Caco-2 (cell line): ENCODE measurements at regions of chr20 and their contacts with region 1.

Region 1: DNA sequence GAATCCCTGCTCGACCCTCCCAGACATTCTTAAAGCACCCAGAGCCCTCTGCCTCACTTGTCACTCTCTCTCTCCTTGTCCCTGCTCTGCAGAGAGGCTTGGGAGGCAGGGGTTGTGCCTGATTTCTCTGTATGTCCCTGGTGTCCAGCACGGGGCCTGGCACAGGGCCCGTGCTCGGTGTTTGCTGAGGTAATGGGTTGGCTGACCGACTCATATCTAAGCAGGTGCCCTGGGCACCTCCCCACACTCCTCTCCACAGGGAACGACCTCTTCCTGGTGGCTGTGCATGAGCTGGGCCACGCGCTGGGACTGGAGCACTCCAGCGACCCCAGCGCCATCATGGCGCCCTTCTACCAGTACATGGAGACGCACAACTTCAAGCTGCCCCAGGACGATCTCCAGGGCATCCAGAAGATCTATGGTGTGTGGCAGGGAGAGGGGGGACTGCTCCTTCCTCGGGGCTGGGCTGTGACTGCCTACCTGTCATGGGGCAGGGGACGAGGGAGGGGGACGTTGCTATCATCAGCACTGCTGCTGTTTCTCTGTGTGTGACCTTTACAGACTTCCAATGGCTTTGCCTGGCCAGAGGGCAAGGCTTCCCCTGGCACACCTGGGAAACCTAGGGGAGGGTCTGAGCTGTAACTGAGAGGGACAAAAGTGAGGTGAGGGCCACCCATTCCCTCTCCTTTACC is 14.2 kb downstream of the MMP24OS start:
- DNase-seq: peak in 1 of 2 experiments; percentile 57
- H3K4me3 ChIP-seq: peak overlapping the region; percentile 13
- H3K4me3 Mint-ChIP-seq: peak overlapping the region; percentile 63
- H3K27ac Mint-ChIP-seq: peak overlapping the region; percentile 98
- H3K4me1 ChIP-seq: peaks cover 65% of the 10 kb centered on the region
- H3K4me1 Mint-ChIP-seq: peaks cover 48% of the 10 kb centered on the region
- H3K27me3 ChIP-seq: no peaks in the 10 kb centered on the region
- H3K27me3 Mint-ChIP-seq: no peaks in the 10 kb centered on the region
- CTCF ChIP-seq: no peak

Region 2: DNA sequence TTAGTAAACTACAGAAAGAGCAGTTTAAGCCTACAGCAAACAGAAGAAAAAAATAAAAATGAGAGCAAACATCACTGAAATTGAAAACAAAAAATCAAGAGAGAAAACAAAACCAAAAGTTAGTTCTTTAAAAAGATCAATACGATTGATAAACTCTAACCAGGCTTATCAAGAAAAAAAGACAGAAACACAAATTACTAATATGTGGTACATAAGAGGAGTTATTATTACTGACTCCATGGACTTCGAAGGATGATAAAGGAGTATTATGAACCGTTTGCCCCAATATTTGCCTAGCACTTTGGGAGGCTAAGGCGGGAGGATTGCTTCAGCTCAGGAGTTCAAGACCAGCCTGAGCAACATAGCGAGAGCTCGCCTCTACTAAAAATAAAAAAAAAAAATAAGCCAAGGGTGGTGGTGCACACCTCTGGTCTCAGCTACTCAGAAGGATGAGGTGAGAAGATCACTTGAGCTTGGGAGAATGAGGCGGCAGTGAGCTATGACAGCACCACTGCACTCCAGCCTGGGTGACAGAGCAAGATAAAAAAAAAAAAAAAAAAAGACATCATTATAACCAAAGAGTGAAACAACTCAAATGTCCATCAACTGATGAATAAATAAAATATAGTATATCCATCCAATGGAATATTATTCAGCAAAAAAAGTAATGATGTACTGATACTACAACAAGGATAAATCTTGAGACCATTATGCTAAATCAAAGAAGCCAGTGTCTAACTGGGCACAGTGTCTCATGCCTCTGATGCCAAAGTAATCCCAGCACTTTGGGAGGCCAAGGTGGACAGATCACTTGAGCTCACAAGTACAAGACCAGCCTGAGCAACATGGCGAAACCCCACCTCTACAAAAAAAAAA is 184.0 kb before region 1 on chr20:
- CTCF ChIA-PET with region 1: no interaction called
- POLR2A ChIA-PET with region 1: no interaction called
- intact Hi-C with region 1: no loop called
- DNase-seq: no peak
- H3K4me3 ChIP-seq: no peak overlapping the region
- H3K4me3 Mint-ChIP-seq: no peak overlapping the region
- H3K27ac Mint-ChIP-seq: no peak overlapping the region
- H3K4me1 ChIP-seq: no peaks in the 10 kb centered on the region
- H3K4me1 Mint-ChIP-seq: peaks cover 7% of the 10 kb centered on the region
- H3K27me3 ChIP-seq: no peaks in the 10 kb centered on the region
- H3K27me3 Mint-ChIP-seq: no peaks in the 10 kb centered on the region
- CTCF ChIP-seq: no peak

Region 3: GRCh38 chr20:35174458-35175216 is 89.0 kb before region 1 on chr20:
- CTCF ChIA-PET with region 1: interaction called, 4 read pairs
- POLR2A ChIA-PET with region 1: interaction called, 11 read pairs
- intact Hi-C with region 1: no loop called
- DNase-seq: peak; percentile 93 to 97
- H3K4me3 ChIP-seq: peak overlapping the region; percentile 60
- H3K4me3 Mint-ChIP-seq: peak overlapping the region; percentile 91
- H3K27ac Mint-ChIP-seq: peak overlapping the region; percentile 81
- H3K4me1 ChIP-seq: peaks cover 48% of the 10 kb centered on the region
- H3K4me1 Mint-ChIP-seq: peaks cover 53% of the 10 kb centered on the region
- H3K27me3 ChIP-seq: no peaks in the 10 kb centered on the region
- H3K27me3 Mint-ChIP-seq: no peaks in the 10 kb centered on the region
- CTCF ChIP-seq: no peak

Region 4: GRCh38 chr20:35248641-35249475 is 14.8 kb before region 1 on chr20:
- CTCF ChIA-PET with region 1: interaction called, 7 read pairs
- POLR2A ChIA-PET with region 1: interaction called, 11 read pairs
- intact Hi-C with region 1: no loop called
- DNase-seq: no peak
- H3K4me3 ChIP-seq: no peak overlapping the region
- H3K4me3 Mint-ChIP-seq: no peak overlapping the region
- H3K27ac Mint-ChIP-seq: no peak overlapping the region
- H3K4me1 ChIP-seq: no peaks in the 10 kb centered on the region
- H3K4me1 Mint-ChIP-seq: peaks cover 7% of the 10 kb centered on the region
- H3K27me3 ChIP-seq: no peaks in the 10 kb centered on the region
- H3K27me3 Mint-ChIP-seq: no peaks in the 10 kb centered on the region
- CTCF ChIP-seq: no peak

Region 5: DNA sequence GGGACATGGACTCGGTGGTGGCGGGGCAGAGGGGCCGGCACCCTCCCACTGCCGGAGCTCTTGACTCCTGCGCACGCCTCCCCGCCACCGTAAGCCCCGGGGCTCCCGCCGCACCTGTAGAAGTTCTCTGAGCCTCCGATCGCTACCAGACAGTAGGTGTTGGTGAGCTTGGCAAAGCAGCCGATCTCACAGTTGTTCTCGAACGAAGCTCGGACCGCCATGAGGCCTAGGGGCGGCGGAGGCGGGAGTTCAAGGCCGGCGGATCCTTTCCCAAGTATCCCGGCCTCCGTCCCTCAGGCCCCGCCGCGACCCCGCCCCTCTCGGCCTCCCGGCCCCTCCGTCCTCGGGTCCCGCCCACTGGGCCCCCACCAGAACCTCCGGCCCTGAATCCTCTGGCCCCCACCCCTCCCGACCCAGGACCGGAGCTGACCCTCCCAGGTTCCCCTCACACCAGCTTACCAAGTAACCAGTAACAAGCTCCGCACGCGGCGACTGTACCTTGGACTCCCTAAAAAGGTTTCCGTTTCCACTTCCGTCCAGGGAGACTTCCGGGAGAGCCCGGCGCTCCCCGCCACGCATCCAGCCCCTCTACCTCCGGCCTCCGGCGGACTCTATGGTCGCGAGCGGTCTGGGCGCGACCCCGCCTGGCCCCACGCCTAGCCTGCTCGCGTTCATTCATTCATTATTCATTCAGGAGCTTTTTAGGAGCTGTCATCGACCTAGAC is 20.8 kb after region 1 on chr20 and contains the start of gene EIF6:
- CTCF ChIA-PET with region 1: interaction called, 8 read pairs
- POLR2A ChIA-PET with region 1: interaction called, 46 read pairs
- intact Hi-C with region 1: no loop called
- DNase-seq: peak; percentile 97 to 98
- H3K4me3 ChIP-seq: peak within 1 kb of the TSS; percentile 95
- H3K4me3 Mint-ChIP-seq: peak within 1 kb of the TSS; percentile 84
- H3K27ac Mint-ChIP-seq: peak within 1 kb of the TSS; percentile 87
- H3K4me1 ChIP-seq: peaks cover 28% of the 10 kb centered on the region
- H3K4me1 Mint-ChIP-seq: peaks cover 18% of the 10 kb centered on the region
- H3K27me3 ChIP-seq: no peaks in the 10 kb centered on the region
- H3K27me3 Mint-ChIP-seq: no peaks in the 10 kb centered on the region
- CTCF ChIP-seq: no peak
- total RNA-seq, gene EIF6: 403 and 420 TPM in 2 replicates

Region 6: DNA sequence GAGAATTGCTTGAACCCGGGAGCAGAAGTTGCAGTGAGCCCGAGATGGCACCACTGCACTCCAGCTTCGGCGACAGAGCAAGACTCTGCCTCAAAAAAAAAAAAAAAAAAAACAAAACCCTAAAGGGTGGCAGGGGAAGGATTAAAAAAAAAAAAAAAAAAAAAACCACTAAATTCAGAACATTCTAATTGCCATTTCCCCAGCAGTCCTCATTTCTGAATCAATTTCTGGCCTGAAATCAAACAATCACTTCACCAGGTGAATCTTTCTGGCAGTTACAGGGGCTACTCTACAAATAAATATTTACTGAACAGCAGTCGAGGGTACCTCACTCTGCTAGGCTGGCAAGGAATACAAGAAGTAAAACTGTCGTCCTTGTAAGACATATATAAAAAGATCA is 146.9 kb after region 1 on chr20:
- CTCF ChIA-PET with region 1: no interaction called
- POLR2A ChIA-PET with region 1: interaction called, 13 read pairs
- intact Hi-C with region 1: no loop called
- DNase-seq: no peak
- H3K4me3 ChIP-seq: peak overlapping the region; percentile 57
- H3K4me3 Mint-ChIP-seq: peak overlapping the region; percentile 94
- H3K27ac Mint-ChIP-seq: peak overlapping the region; percentile 99
- H3K4me1 ChIP-seq: peaks cover 4% of the 10 kb centered on the region
- H3K4me1 Mint-ChIP-seq: peaks cover 7% of the 10 kb centered on the region
- H3K27me3 ChIP-seq: no peaks in the 10 kb centered on the region
- H3K27me3 Mint-ChIP-seq: no peaks in the 10 kb centered on the region
- CTCF ChIP-seq: no peak